Activated CD8-positive, alpha-beta memory T cell treated with anti-CD3 and anti-CD28 coated beads, Interleukin-2, amount 10 ng/mL, durations not matched to agents 7 days and 5 days (primary cell): ENCODE measurements at regions of chr4 and their contacts with region 1.

Region 1: GRCh38 chr4:7067452-7068278 is at the start of gene GRPEL1:
- DNase-seq: peak; percentile 100
- ATAC-seq: peak; percentile 93
- H3K4me3 Mint-ChIP-seq: peak within 1 kb of the TSS; percentile 87
- H3K27ac Mint-ChIP-seq: peak within 1 kb of the TSS; percentile 93
- H3K4me1 Mint-ChIP-seq: peaks cover 42% of the 10 kb centered on the region
- H3K27me3 Mint-ChIP-seq: peaks cover 14% of the 10 kb centered on the region
- total RNA-seq, gene GRPEL1: 40.0 to 59.9 TPM

Region 2: GRCh38 chr4:6898763-6899162 is 168.9 kb before region 1 on chr4:
- CTCF ChIA-PET with region 1: interaction called, 12 read pairs
- DNase-seq: peak; percentile 64
- ATAC-seq: peak; percentile 16
- H3K4me3 Mint-ChIP-seq: peak overlapping the region; percentile 48
- H3K27ac Mint-ChIP-seq: peak overlapping the region; percentile 98
- H3K4me1 Mint-ChIP-seq: peaks cover 69% of the 10 kb centered on the region
- H3K27me3 Mint-ChIP-seq: no peaks in the 10 kb centered on the region

Region 3: GRCh38 chr4:6986781-6987587 is 80.7 kb before region 1 on chr4:
- CTCF ChIA-PET with region 1: interaction called, 19 read pairs
- DNase-seq: peak; percentile 95
- ATAC-seq: peak; percentile 95
- H3K4me3 Mint-ChIP-seq: peak overlapping the region; percentile 92
- H3K27ac Mint-ChIP-seq: peak overlapping the region; percentile 90
- H3K4me1 Mint-ChIP-seq: peaks cover 73% of the 10 kb centered on the region
- H3K27me3 Mint-ChIP-seq: no peaks in the 10 kb centered on the region

Region 4: GRCh38 chr4:7081891-7082471 is 14.3 kb after region 1 on chr4:
- CTCF ChIA-PET with region 1: interaction called, 19 read pairs
- DNase-seq: peak; percentile 63
- ATAC-seq: peak; percentile 73
- H3K4me3 Mint-ChIP-seq: no peak overlapping the region
- H3K27ac Mint-ChIP-seq: no peak overlapping the region
- H3K4me1 Mint-ChIP-seq: no peaks in the 10 kb centered on the region
- H3K27me3 Mint-ChIP-seq: peaks cover 60% of the 10 kb centered on the region

Region 5: GRCh38 chr4:7381221-7381889 is 313.7 kb after region 1 on chr4:
- CTCF ChIA-PET with region 1: no interaction called
- DNase-seq: no peak
- ATAC-seq: no peak
- H3K4me3 Mint-ChIP-seq: no peak overlapping the region
- H3K27ac Mint-ChIP-seq: no peak overlapping the region
- H3K4me1 Mint-ChIP-seq: no peaks in the 10 kb centered on the region
- H3K27me3 Mint-ChIP-seq: peaks cover 15% of the 10 kb centered on the region